HCT116 (cell line): ENCODE measurements at regions of chr14 and their contacts with region 1.

Region 1: DNA sequence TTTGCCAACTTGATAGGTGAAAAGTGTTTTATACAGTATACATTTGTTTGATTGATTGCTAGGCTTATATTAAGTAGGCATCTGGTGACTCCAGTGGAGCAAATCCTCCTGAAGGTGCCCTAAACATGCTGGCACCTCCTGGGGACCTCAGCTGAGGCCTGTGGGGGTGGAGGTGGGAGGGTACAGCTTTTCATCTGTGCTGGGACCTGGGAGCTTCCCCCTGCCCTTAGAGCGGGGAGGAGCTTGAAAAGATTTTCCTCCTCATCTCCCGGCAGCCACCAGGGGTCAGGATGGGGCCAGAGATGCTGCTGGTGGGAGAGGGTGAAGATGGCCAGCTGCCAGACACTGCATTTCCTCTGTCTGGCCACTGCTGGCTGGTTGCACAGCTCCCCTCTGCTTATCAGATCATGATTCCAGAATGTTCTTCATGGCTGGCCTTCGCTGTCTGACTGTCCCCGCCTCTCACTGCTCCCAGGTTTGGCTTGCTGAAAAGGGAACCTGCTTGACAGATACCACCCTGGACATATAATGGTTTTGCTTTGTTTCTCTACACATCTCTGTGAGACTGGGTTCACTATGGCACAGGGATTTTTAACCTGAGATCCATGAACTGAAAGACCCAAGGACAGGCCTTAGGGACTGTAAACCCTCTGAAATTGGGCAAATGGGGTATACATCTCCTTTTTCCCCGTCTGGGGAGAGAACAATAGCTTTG is 10.5 kb upstream of the JPH4 start:
- DNase-seq: peak; percentile 81
- ATAC-seq: peak; percentile 99
- H3K4me3 ChIP-seq: no peak overlapping the region
- H3K27ac ChIP-seq: 0 out of 2 replicates have a peak overlapping the region, but pooled peaks have one; percentile 16
- H3K4me1 ChIP-seq: peaks cover 4 to 12% of the 10 kb centered on the region in 2 experiments; a peak in 3 of 4 replicates
- H3K27me3 ChIP-seq: no peaks in the 10 kb centered on the region
- CTCF ChIP-seq: peak; percentile 84 to 95 (median 90)
- POLR2A ChIP-seq: no peak
- RAD21 ChIP-seq: peak; percentile 86

Region 2: DNA sequence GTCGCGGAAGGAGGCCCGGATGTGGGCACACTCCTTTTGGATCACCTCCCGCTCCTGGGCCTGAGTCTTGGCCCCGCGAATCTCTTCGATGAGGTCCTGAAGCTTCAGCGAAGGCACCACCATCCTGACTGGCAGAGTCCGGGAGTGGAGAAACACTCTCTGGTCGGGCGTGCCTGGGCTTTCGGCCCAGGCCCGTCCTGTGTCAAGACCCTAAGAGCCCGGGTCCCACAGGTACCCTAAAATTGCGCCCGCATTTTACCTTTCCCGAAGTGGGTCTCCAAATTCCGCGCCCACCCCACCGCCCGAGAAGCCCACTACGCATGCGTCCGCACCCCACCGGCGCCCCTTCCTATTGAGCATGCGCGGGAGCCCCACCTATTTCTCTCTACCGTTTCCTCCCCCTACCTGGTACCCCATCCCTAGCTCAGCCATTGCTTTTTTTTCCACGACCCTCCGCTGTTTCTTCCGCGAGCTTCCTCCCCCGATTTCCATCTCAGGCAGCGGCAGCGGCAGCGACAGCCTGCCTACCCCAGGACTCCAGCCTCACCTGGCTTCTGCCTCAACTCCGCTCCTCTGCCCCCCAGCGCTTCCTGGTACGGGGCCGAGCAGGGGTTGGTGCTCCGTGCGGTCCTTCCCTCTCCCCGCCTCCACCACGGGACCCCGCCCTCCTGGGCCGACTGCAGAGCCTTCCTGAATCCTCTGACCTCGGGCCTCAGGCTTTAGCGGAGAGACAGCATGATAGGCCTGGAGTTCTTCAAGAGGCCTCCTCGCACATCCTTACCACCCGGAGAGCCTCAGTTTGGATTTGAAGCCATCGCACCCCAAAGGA is 21.6 kb before region 1 on chr14 and contains the start of gene AP1G2:
- CTCF ChIA-PET with region 1: interaction called, 13 read pairs
- POLR2A ChIA-PET with region 1: interaction called, 6 read pairs
- RAD21 ChIA-PET with region 1: no interaction called
- intact Hi-C with region 1: no loop called
- DNase-seq: peak; percentile 73
- ATAC-seq: peak; percentile 89
- H3K4me3 ChIP-seq: peak within 1 kb of the TSS; percentile 85 to 88
- H3K27ac ChIP-seq: peak within 1 kb of the TSS; percentile 86
- H3K4me1 ChIP-seq: peaks cover 26 to 34% of the 10 kb centered on the region in 2 experiments
- H3K27me3 ChIP-seq: no peaks in the 10 kb centered on the region
- CTCF ChIP-seq: no peak
- POLR2A ChIP-seq: peak; percentile 84
- RAD21 ChIP-seq: no peak
- total RNA-seq, gene AP1G2: 155 TPM

Region 3: DNA sequence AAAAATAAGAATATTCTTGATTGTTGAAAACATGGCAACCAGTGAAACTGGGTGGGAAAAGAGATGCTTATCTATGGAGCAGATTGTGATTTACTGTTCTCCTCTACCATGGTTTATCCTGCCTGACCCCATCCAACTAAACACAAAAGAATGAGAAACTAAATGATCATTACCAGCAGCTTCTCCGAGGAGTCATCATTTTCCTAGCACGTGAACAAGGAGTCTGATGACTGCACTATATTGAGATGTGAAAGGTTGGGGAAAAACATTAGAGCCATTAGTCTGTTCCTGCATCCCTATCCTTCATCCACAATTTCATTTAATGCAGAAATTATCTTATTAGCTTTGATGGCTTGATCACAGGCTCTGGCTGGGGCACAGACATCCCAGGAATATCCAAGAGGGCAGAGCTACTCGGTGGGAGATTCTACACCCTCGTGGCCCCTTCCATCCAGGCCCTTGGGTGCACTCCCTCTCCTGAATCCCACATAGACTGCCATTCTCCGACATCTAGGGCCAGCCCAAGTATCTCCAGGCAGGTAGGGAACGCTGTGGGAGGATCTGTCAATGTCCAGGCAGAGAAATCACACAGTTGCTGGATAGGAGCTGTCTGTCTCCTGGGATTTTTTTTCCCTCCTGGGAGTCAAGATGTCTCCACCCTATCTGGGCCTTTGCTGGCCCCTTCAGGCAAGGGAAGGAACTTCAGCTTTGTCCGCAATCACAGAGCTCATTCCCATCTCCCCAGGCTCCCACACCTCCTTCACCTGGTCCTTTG is 321.2 kb after region 1 on chr14:
- CTCF ChIA-PET with region 1: interaction called, 45 read pairs
- POLR2A ChIA-PET with region 1: interaction called, 5 read pairs
- RAD21 ChIA-PET with region 1: interaction called, 4 to 7 read pairs
- intact Hi-C with region 1: no loop called
- DNase-seq: peak; percentile 38
- ATAC-seq: peak; percentile 98
- H3K4me3 ChIP-seq: no peak overlapping the region
- H3K27ac ChIP-seq: no peak overlapping the region
- H3K4me1 ChIP-seq: no peaks in the 10 kb centered on the region
- H3K27me3 ChIP-seq: no peaks in the 10 kb centered on the region
- CTCF ChIP-seq: peak; percentile 83 to 93 (median 85)
- POLR2A ChIP-seq: no peak
- RAD21 ChIP-seq: peak; percentile 85

Region 4: DNA sequence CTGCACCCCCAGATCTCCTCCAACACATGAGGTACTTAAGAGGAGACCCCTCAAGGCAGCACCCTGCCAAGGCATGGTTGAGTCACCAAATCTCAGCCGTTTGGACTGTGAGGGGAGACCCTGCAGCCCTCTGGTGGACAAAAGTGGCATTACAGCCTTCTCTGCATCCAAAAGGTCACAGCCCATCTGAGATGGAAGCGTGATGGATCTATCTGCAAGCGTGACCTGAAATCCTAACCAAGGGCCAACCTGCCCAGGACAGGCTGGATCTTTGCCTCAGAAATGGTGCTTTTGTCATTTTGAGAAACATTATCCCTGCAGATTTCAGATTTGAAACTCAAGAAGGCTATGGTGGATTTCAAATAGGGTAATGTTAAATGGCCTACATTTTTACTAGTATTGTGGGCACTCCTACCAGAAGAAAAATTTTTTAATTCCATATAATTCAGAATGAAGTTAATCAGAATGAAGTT is 340.8 kb after region 1 on chr14:
- CTCF ChIA-PET with region 1: interaction called, 15 read pairs
- POLR2A ChIA-PET with region 1: no interaction called
- RAD21 ChIA-PET with region 1: interaction called, 3 to 4 read pairs
- intact Hi-C with region 1: loop called (anchors 1 kb)
- DNase-seq: peak; percentile 59
- ATAC-seq: peak; percentile 99
- H3K4me3 ChIP-seq: no peak overlapping the region
- H3K27ac ChIP-seq: no peak overlapping the region
- H3K4me1 ChIP-seq: no peaks in the 10 kb centered on the region
- H3K27me3 ChIP-seq: no peaks in the 10 kb centered on the region
- CTCF ChIP-seq: peak; percentile 80 to 97 (median 95)
- POLR2A ChIP-seq: no peak
- RAD21 ChIP-seq: peak; percentile 69

Region 5: DNA sequence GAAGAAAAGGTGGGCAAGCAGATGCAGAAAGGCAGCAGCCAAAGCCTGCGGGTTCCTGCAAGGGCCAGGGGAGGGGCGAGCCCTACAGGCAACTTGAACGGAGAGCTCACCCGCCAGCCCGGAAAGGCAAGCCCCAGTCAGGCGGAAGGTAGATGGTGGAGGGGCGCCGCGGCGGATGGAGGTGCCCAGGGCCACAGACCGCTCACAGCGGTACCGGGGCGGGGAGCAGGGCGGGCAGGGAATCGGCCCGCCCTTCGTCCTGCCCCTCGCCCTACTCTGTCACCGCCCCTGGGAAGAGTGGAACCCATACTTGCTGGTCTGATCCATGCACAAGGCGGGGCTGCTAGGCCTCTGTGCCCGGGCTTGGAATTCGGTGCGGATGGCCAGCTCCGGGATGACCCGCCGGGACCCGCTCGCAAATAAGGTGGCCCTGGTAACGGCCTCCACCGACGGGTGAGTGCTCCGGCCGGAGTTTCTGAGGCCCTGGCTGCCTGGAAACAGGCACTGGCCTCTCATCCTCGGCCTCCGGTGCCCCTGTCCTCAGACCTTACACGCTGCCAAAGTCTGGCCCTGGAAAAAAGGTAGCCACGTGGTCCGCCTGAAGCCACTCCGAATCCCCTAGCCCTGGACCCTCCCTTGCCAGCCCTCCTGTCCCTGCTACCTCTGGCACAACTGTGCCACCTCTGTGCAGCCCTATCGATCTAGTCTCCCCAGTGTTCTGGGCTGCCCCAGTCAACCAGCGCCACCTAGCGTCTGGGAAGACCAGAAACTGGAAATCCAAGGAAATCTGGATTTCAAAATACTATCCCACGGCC is 364.6 kb after region 1 on chr14 and contains the start of gene DHRS4:
- CTCF ChIA-PET with region 1: interaction called, 3 read pairs
- POLR2A ChIA-PET with region 1: no interaction called
- RAD21 ChIA-PET with region 1: no interaction called
- intact Hi-C with region 1: loop called (anchors 1 kb)
- DNase-seq: peak; percentile 67
- ATAC-seq: peak; percentile 98
- H3K4me3 ChIP-seq: peak within 1 kb of the TSS; percentile 85 to 87
- H3K27ac ChIP-seq: peak within 1 kb of the TSS; percentile 96
- H3K4me1 ChIP-seq: peaks cover 0 to 9% of the 10 kb centered on the region in 2 experiments; a peak in 2 of 4 replicates
- H3K27me3 ChIP-seq: no peaks in the 10 kb centered on the region
- CTCF ChIP-seq: peak; percentile 63 to 93 (median 92); a peak in 5 of 6 replicates
- POLR2A ChIP-seq: peak; percentile 66
- RAD21 ChIP-seq: peak; percentile 56; the same call in 1 of the 2 replicates
- total RNA-seq, gene DHRS4: 21.8 TPM

Region 6: DNA sequence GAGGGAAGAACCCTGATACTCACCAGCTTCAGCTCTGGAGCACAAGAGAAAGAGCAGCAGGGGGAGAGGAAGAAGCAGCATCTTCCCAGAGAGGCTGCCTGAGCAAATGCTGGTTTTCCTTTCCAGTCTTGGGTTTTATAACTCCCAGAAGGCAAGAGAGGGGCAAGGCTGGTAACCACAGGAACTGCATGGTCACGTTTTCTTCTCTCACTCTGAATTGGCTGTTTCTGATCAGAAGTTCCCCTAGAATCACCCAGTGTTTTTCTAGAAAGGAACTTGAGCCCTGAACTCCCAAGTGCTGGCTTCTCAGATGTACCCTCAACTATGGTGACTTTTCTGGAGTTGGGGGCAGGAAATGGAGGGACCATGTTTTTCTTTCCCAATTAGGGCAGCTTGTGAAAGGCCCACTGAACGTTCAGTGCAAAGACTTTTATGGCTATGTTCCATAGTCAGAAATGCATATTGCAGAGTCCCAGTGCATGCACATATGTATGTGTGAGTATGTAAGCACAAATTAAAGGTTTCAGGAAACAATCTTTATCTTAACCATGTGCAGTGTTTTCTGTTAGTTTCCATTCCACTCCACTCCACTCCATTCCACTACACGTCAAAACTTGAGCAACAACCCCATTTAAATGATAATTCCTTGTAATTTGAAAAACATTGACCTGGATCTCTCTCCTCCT is 919.3 kb after region 1 on chr14 and contains the start of gene CMA1:
- CTCF ChIA-PET with region 1: no interaction called
- POLR2A ChIA-PET with region 1: no interaction called
- RAD21 ChIA-PET with region 1: no interaction called
- intact Hi-C with region 1: no loop called
- DNase-seq: no peak
- ATAC-seq: no peak
- H3K4me3 ChIP-seq: no peak within 1 kb of the TSS
- H3K27ac ChIP-seq: no peak within 1 kb of the TSS
- H3K4me1 ChIP-seq: no peaks in the 10 kb centered on the region
- H3K27me3 ChIP-seq: peaks cover 37% of the 10 kb centered on the region
- CTCF ChIP-seq: no peak
- POLR2A ChIP-seq: no peak
- RAD21 ChIP-seq: no peak
- total RNA-seq, gene CMA1: not detected